Endothelial cell of umbilical vein (primary cell): ENCODE measurements at regions of chr2 and their contacts with region 1.

Region 1: DNA sequence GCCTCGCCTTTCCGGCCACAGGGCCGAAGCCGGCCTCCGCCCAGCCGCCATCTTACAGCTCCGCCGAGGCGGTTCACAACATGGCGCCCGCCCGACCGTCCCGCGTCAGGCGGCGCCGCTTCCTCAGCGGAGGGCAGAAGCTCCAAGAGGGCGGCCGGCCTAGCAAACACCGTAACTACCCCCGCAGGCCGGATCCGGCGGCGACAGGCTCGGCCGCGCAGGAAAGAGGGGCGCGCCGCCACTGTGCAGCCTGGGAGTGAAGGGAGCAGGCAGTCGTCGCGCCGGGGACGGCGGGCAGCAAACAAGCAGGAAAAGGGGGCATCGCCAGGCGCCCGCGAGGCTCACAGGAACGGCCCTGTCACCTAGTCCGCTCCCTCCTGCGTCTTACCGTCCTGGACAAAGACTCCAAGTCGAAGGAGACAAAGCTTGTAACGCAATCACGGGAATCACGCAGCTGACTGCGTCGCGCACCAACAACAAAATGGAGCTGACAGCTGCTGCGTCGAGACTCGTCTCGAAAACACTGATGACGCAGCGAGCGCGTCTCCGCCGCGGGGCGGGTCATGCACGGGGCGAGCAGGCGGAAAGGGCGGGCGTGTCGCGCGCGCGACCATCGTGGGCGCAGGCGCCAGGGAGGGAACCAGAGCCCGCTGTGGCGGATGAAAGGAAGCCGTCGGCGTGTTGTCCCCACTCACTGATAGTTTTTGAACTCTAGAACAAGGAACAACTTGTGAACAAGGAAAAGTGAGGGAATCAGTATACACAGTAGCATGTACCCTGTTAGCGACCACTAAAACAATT is at the start of gene CLK1:
- DNase-seq: peak; percentile 95
- H3K4me3 ChIP-seq: peak within 1 kb of the TSS; percentile 90 to 99 (median 91)
- H3K27ac ChIP-seq: peak within 1 kb of the TSS; percentile 88
- H3K4me1 ChIP-seq: peaks cover 26% of the 10 kb centered on the region
- H3K27me3 ChIP-seq: no peaks in the 10 kb centered on the region
- CTCF ChIP-seq: no peak
- POLR2A ChIP-seq: peak; percentile 97
- total RNA-seq, gene CLK1: 79.7 and 92.4 TPM in 2 replicates

Region 2: GRCh38 chr2:200618587-200619021 is 245.8 kb before region 1 on chr2:
- CTCF ChIA-PET with region 1: no interaction called
- POLR2A ChIA-PET with region 1: no interaction called
- dilution Hi-C with region 1: no loop called
- intact Hi-C with region 1: no loop called
- DNase-seq: no peak
- H3K4me3 ChIP-seq: no peak overlapping the region
- H3K27ac ChIP-seq: no peak overlapping the region
- H3K4me1 ChIP-seq: no peaks in the 10 kb centered on the region
- H3K27me3 ChIP-seq: no peaks in the 10 kb centered on the region
- CTCF ChIP-seq: no peak
- POLR2A ChIP-seq: no peak

Region 3: GRCh38 chr2:200888704-200889625 is 24.6 kb after region 1 on chr2 and contains the starts of genes NIF3L1 and PPIL3:
- CTCF ChIA-PET with region 1: interaction called, 5 read pairs
- POLR2A ChIA-PET with region 1: interaction called, 11 read pairs
- dilution Hi-C with region 1: no loop called
- intact Hi-C with region 1: loop called (anchors 1 kb)
- DNase-seq: peak; percentile 96
- H3K4me3 ChIP-seq: peak within 1 kb of the TSS; percentile 24 to 76 (median 63)
- H3K27ac ChIP-seq: peak within 1 kb of the TSS; percentile 91
- H3K4me1 ChIP-seq: peaks cover 13% of the 10 kb centered on the region
- H3K27me3 ChIP-seq: no peaks in the 10 kb centered on the region
- CTCF ChIP-seq: peak in 1 of 2 donors; percentile 11
- POLR2A ChIP-seq: peak; percentile 82
- total RNA-seq, gene NIF3L1: 14.9 and 16.3 TPM in 2 replicates
- total RNA-seq, gene PPIL3: 25.0 and 28.7 TPM in 2 replicates